Activated naive CD4-positive, alpha-beta T cell treated with anti-CD3 and anti-CD28 coated beads, Interleukin-2, amount 10 ng/mL, durations not matched to agents 7 days and 5 days (primary cell): ENCODE measurements at regions of chr16 and their contacts with region 1.

Region 1: DNA sequence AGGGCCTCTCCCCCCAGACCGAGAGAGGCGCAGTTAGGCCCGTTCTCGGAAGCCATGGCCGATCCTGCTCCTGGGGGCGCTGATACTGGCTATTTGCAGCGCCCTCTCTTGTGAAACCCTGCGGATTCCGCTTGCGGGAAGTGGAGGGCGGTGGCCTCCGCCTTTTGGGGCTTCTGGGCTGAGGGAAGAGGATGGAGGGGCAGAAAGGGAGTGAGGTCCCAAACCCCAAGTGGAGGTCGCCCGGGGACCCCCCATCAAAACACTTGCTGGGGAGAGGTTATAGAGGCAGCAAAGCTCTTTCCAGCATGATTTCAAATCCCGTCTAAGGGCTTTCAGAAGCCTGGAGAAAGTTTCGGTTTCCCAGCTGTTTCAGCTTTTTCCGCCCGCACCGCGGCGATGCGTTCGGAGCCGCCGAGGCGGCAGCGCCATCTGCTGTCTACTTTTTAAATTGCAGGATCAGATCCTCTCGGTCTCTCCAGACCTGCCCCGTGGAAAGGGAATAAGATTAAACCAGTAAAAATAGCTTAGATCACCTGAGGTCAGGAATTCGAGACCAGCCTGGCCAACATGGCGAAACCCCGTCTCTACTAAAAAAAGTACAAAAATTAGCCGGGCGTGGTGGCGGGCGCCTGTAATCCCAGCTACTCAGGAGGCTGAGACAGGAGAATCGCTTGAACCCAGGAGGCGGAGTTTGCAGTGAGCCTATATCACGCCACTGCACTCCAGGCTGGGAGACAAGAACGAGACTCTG is 15.8 kb downstream of the SNX20 start:
- DNase-seq: peak; percentile 88
- H3K4me3 Mint-ChIP-seq: peak overlapping the region; percentile 58
- H3K27ac Mint-ChIP-seq: peak overlapping the region; percentile 81
- H3K4me1 Mint-ChIP-seq: peaks cover 47% of the 10 kb centered on the region
- H3K27me3 Mint-ChIP-seq: peaks cover 6% of the 10 kb centered on the region

Region 2: GRCh38 chr16:50065624-50066481 is 599.5 kb before region 1 on chr16 and contains the start of gene HEATR3:
- CTCF ChIA-PET with region 1: interaction called, 14 read pairs
- DNase-seq: peak; percentile 95
- H3K4me3 Mint-ChIP-seq: peak within 1 kb of the TSS; percentile 91
- H3K27ac Mint-ChIP-seq: peak within 1 kb of the TSS; percentile 96
- H3K4me1 Mint-ChIP-seq: peaks cover 46% of the 10 kb centered on the region
- H3K27me3 Mint-ChIP-seq: no peaks in the 10 kb centered on the region

Region 3: DNA sequence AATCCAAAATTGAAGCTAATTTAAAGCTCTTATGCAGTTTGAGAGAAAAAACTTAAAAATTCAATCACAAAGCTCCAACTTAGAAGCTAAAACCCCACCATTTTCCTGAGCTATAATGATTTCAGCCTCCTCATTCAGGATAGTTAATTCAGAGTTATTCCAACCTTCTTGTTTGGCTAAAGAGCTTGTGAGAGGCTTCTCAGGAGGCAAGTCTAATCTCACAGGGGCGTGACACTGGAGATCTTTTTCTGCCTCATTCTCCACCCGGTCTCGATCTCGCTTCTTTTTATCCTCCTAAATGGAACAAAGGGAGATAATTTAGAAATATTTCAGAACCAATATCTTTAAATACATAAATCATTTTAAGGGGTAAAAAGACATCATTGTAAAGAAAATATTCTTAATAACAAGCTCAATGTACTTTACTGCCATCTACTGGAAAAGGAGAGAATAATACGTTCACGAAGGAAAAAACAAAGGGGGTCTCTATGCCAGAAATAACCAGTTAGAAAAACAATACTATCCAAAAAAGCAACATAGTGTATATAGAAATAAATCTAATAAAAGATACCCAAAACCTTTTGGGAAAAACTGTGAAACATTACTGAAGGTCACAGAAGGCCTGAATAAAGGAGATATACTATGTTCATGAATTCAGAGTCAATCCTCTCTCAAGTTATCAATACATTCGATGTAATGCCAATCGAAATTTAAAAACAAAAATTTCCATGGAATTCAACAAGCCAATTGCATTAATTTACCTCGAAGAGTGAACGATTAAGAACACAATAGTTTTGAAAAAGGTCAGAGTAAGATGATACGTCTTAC is 310.5 kb before region 1 on chr16:
- CTCF ChIA-PET with region 1: interaction called, 10 read pairs
- DNase-seq: no peak
- H3K4me3 Mint-ChIP-seq: no peak overlapping the region
- H3K27ac Mint-ChIP-seq: peak overlapping the region; percentile 60
- H3K4me1 Mint-ChIP-seq: peaks cover 22% of the 10 kb centered on the region
- H3K27me3 Mint-ChIP-seq: no peaks in the 10 kb centered on the region

Region 4: GRCh38 chr16:50627419-50627818 is 37.9 kb before region 1 on chr16:
- CTCF ChIA-PET with region 1: interaction called, 10 read pairs
- DNase-seq: peak; percentile 68
- H3K4me3 Mint-ChIP-seq: peak overlapping the region; percentile 43
- H3K27ac Mint-ChIP-seq: peak overlapping the region; percentile 24
- H3K4me1 Mint-ChIP-seq: peaks cover 31% of the 10 kb centered on the region
- H3K27me3 Mint-ChIP-seq: peaks cover 6% of the 10 kb centered on the region

Region 5: GRCh38 chr16:50741808-50742575 is 76.7 kb after region 1 on chr16 and contains the start of gene CYLD:
- CTCF ChIA-PET with region 1: interaction called, 183 read pairs
- DNase-seq: peak; percentile 100
- H3K4me3 Mint-ChIP-seq: peak within 1 kb of the TSS; percentile 85
- H3K27ac Mint-ChIP-seq: peak within 1 kb of the TSS; percentile 98
- H3K4me1 Mint-ChIP-seq: peaks cover 40% of the 10 kb centered on the region
- H3K27me3 Mint-ChIP-seq: no peaks in the 10 kb centered on the region

Region 6: DNA sequence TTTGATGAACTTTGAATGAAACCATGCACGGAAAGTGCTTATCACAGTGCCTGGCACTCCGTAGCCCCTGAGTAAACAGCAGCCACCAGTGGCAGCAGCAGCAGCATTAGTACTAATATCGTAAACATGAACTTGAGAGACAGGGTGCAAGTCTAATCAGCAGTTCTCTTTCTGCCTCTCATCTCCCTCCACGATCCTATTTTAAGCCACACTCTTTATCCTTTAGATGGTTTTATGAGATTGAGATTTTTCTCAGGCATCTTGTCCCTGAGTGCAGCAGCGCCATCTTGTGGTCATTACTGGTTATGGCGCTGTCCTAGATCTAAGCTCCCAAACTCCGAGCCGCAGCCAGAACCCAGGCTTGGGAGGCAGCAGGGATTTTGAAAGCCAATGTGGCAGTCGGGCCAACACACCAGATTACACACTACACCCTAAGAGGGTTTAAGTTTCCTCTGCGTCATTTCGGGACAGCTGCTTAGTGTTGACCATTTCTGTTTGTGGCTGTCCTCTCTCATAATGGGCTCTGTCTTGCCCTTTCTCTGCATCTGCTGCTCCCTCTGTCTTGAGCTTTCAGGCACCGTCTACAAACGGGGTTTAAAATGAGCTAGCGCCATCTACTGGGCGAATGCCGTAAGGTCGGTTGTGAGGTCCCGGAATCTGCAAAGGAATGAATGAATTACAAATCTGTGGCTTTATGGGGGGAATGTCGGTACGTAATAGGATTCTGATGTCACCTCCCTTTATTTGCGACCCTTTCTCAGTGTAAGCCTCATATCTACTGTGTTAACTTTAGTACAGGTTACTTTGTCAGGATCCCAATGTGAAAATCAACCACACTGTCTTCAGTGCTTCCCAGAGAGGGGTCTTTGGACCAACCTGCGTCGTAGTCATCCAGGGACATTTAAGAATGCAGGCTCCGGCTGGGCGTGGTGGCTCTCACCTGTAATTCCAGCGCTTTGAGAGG is 141.1 kb after region 1 on chr16:
- CTCF ChIA-PET with region 1: interaction called, 239 read pairs
- DNase-seq: peak; percentile 89
- H3K4me3 Mint-ChIP-seq: peak overlapping the region; percentile 45
- H3K27ac Mint-ChIP-seq: peak overlapping the region; percentile 67
- H3K4me1 Mint-ChIP-seq: peaks cover 15% of the 10 kb centered on the region
- H3K27me3 Mint-ChIP-seq: peaks cover 3% of the 10 kb centered on the region

Region 7: GRCh38 chr16:51095084-51095881 is 430.0 kb after region 1 on chr16:
- CTCF ChIA-PET with region 1: no interaction called
- DNase-seq: no peak
- H3K4me3 Mint-ChIP-seq: no peak overlapping the region
- H3K27ac Mint-ChIP-seq: no peak overlapping the region
- H3K4me1 Mint-ChIP-seq: no peaks in the 10 kb centered on the region
- H3K27me3 Mint-ChIP-seq: no peaks in the 10 kb centered on the region